Activated T-helper 1 cell treated with anti-CD3 and anti-CD28 coated beads, Interleukin-12 subunit alpha, Interleukin-12 subunit beta, Interleukin-2, Interleukin-4 antibody, amounts not matched to agents 30 ng/mL and 10 ng/mL and 1 ng/mL, durations not matched to agents 14 hours and 24 hours and 36 hours (primary cell): ENCODE measurements at regions of chr5 and their contacts with region 1.

Region 1: GRCh38 chr5:123594434-123594833 is 82.5 kb downstream of the CSNK1G3 start:
- DNase-seq: no peak
- H3K4me3 Mint-ChIP-seq: no peak overlapping the region
- H3K27ac Mint-ChIP-seq: no peak overlapping the region
- H3K4me1 Mint-ChIP-seq: no peaks in the 10 kb centered on the region
- H3K27me3 Mint-ChIP-seq: no peaks in the 10 kb centered on the region

Region 2: DNA sequence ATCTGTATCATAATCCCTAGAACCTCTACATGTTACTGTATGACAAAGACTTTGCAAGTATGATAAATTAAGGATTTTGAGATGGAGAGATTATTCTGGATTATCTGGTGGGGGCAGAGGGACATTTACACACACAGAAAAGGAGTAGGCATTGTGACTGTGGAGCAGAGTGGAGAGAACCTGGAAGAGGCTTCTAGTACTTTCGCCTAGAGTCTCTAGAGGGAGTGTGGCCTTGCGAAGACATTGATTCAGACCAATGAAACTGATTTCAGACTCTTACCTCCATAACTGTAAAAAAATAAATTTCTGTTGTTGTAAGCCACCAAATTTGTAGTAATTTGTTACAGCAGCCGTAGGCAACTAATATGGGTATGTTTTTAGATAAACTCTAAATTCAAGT is 36.5 kb before region 1 on chr5:
- intact Hi-C with region 1: loop called (anchors 2 kb)
- DNase-seq: no peak
- H3K4me3 Mint-ChIP-seq: no peak overlapping the region
- H3K27ac Mint-ChIP-seq: no peak overlapping the region
- H3K4me1 Mint-ChIP-seq: peaks cover 6% of the 10 kb centered on the region
- H3K27me3 Mint-ChIP-seq: no peaks in the 10 kb centered on the region

Region 3: DNA sequence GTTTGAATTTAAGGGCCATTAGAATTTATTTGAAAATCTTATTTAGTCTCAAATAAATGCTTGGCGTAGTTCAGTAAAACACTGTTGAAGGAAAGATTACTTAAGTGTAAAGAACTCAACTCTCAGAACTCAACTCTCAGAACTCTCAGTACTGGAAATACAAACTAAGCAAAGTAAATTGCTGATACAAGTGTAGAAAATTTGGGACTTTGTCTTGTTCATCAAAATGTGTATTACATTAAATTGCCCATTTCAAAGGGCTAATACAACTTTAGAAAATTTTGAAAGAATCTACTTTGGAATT is 16.9 kb after region 1 on chr5:
- intact Hi-C with region 1: no loop called
- DNase-seq: no peak
- H3K4me3 Mint-ChIP-seq: no peak overlapping the region
- H3K27ac Mint-ChIP-seq: no peak overlapping the region
- H3K4me1 Mint-ChIP-seq: peaks cover 12% of the 10 kb centered on the region
- H3K27me3 Mint-ChIP-seq: no peaks in the 10 kb centered on the region